ENCODE measurements at regions of chr11 and their contacts with region 1.

Region 1: DNA sequence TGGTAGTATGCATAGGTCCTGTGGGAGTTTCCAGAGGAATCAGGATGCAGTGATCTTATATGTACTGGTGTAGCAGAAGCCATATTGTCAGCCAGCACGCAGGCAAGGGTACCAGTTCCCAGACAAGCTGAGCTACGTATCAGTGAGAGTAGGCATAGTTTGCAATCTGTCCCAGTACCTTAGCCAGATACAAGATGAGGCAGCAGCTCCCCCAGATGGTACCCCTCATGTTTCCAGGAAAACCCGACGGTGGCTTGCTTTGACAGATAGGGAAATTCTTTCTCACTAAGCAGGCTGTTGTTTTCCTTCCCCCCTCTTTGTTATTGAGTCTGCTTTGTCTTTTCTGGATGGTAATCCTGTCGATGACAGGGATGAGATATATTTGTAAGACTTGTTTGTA is 109.7 kb upstream of the RRM1 start:
- DNase-seq: no peak
- H3K4me3 Mint-ChIP-seq: no peak overlapping the region
- H3K27ac Mint-ChIP-seq: peak overlapping the region; percentile 73
- H3K4me1 Mint-ChIP-seq: peaks cover 54% of the 10 kb centered on the region
- H3K27me3 Mint-ChIP-seq: no peaks in the 10 kb centered on the region

Region 2: GRCh38 chr11:4065601-4066377 is 80.9 kb after region 1 on chr11:
- intact Hi-C with region 1: loop called (anchors 5 kb)
- DNase-seq: no peak
- H3K4me3 Mint-ChIP-seq: no peak overlapping the region
- H3K27ac Mint-ChIP-seq: no peak overlapping the region
- H3K4me1 Mint-ChIP-seq: peaks cover 40% of the 10 kb centered on the region
- H3K27me3 Mint-ChIP-seq: no peaks in the 10 kb centered on the region

Region 3: DNA sequence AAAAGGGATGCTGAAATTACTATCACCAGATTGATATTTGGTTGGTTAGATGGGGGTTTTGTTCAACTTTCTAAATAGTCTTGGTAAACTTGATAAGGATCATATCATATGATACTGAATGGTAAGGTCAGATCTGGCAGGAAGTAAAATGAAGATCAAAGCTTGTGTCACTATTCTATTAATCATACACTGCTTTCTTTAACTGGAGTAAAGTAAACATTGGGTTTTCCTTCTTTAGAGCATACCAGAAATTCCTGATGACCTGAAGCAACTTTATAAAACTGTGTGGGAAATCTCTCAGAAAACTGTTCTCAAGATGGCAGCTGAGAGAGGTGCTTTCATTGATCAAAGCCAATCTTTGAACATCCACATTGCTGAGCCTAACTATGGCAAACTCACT is 149.9 kb after region 1 on chr11:
- intact Hi-C with region 1: no loop called
- DNase-seq: no peak
- H3K4me3 Mint-ChIP-seq: no peak overlapping the region
- H3K27ac Mint-ChIP-seq: no peak overlapping the region
- H3K4me1 Mint-ChIP-seq: peaks cover 2% of the 10 kb centered on the region
- H3K27me3 Mint-ChIP-seq: no peaks in the 10 kb centered on the region